ENCODE measurements at regions of chr3 and their contacts with region 1.

Region 1: GRCh38 chr3:178405531-178405930 is 130.7 kb upstream of the KCNMB2 start:
- DNase-seq: no peak
- H3K4me3 ChIP-seq: no peak overlapping the region
- H3K27ac ChIP-seq: no peak overlapping the region
- H3K4me1 ChIP-seq: no peaks in the 10 kb centered on the region
- H3K27me3 ChIP-seq: no peaks in the 10 kb centered on the region
- CTCF ChIP-seq: no peak

Region 2: DNA sequence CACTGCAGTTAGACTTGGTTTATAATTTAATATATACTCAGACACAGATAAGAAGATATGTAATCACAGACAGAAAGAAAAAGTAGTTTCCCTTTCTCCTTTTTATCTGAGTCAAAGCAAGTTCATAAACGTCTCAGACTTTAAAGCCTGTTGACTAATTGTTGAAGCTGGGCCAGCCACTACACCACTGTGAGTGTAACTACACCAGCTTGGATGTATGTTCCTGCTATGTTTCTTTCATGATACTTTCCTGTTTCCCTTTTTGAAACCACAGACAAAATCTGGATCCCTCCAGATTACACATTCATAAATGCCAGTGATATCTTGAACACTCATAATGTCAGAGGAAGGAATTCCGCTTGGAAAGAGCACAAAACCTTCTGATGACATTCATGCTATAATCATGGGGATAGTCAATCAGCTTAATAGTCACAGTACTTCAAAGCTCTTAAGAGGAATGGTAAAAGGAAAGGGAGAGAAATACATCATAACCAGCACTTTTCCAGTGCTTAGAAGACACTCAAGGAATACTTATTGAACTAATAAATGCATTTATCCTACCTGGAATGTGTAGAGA is 162.7 kb after region 1 on chr3:
- CTCF ChIA-PET with region 1: interaction called, 18 read pairs
- POLR2A ChIA-PET with region 1: no interaction called
- intact Hi-C with region 1: no loop called
- DNase-seq: no peak
- H3K4me3 ChIP-seq: no peak overlapping the region
- H3K27ac ChIP-seq: no peak overlapping the region
- H3K4me1 ChIP-seq: no peaks in the 10 kb centered on the region
- H3K27me3 ChIP-seq: no peaks in the 10 kb centered on the region
- CTCF ChIP-seq: no peak